ENCODE measurements at regions of chr15 and their contacts with region 1.

Region 1: DNA sequence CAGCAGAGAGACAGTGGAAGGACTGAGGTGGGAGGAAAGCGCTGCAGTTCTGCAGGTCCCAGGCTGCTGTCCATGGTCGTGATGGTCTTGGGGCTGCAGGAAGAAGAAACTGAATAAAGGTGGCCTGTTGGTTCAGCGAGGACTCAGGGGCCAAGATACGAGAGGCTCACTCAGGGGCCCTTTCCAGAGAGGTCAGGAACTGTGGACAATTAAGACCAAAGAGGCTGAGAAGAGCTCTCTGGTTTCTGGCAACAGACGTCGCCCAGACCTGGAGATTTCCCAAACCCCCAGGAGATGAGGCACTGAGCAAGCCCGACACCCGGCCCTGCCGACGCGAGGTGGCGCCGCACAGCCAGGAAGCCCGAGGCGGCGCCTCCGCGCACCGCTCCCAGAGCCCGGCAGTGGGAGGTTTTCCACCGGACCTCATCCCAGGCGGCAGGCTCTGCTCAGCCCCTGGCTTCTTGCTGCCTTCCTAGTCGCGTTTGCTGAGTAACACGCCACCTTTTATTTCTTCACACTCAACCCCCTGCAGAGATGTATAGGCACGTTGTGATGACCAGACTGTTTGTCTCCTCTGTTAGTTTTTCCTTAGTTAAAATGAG is 56.4 kb upstream of the ARRDC4 start:
- DNase-seq: peak; percentile 60 to 81 (median 75)
- ATAC-seq: peak; percentile 81 to 99 (median 92)
- H3K4me3 ChIP-seq: peak overlapping the region in 1 of 12 donors; percentile 6
- H3K27ac ChIP-seq: no peak overlapping the region
- H3K4me1 ChIP-seq: peaks cover 0 to 8% (median 0%) of the 10 kb centered on the region in 12 donors
- H3K27me3 ChIP-seq: peaks cover 0 to 40% (median 18%) of the 10 kb centered on the region in 9 donors
- CTCF ChIP-seq: peak; percentile 44 to 76 (median 66)
- POLR2A ChIP-seq: no peak

Region 2: GRCh38 chr15:98085003-98085639 is 181.0 kb after region 1 on chr15:
- intact Hi-C with region 1: loop called (anchors 1 to 2 kb)
- DNase-seq: peak in 1 of 5 donors; percentile 35
- ATAC-seq: no peak
- H3K4me3 ChIP-seq: no peak overlapping the region
- H3K27ac ChIP-seq: no peak overlapping the region
- H3K4me1 ChIP-seq: no peaks in the 10 kb centered on the region
- H3K27me3 ChIP-seq: no peaks in the 10 kb centered on the region
- CTCF ChIP-seq: peak; percentile 48 to 77 (median 68)
- POLR2A ChIP-seq: no peak

Region 3: DNA sequence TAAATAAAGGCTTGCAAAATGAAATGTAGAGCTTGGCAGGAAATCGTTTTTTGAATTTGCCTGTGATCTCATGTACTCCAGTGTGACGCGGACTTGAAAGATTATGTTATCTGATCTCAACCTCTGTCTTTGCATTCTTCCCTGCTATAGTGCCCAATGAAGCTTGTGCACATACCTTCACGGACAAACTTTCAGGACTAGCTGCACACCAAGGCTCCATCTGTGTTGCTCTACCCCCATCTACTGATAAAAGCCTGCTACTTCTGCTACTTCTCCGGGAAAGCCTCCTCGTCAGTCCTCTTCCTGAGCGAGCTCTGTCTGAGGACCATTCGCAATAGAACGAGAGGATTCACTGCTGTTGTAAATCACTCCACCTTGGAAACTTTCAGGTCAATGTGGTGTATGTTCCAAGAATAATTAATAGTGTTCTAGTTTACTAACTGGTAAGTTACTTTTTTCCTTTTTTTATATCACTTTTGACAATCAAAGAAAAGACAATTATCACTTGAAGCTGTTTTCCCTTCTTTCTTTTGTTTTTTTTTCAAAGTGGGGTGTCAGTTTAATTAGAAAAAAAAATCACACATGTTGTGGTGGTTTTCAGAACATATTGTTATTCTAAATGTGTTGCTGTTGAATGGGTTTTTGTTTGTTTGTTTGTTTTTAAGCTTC is 274.0 kb after region 1 on chr15:
- intact Hi-C with region 1: loop called in 9 of 10 experiments (anchors 2 to 5 kb)
- DNase-seq: peak in 3 of 5 donors; percentile 13 to 23 (median 22)
- ATAC-seq: peak in 3 of 4 donors; percentile 70 to 87 (median 72)
- H3K4me3 ChIP-seq: no peak overlapping the region
- H3K27ac ChIP-seq: no peak overlapping the region
- H3K4me1 ChIP-seq: no peaks in the 10 kb centered on the region
- H3K27me3 ChIP-seq: peaks cover 0 to 82% (median 19%) of the 10 kb centered on the region in 9 donors
- CTCF ChIP-seq: peak; percentile 31 to 74 (median 56)
- POLR2A ChIP-seq: no peak

Region 4: DNA sequence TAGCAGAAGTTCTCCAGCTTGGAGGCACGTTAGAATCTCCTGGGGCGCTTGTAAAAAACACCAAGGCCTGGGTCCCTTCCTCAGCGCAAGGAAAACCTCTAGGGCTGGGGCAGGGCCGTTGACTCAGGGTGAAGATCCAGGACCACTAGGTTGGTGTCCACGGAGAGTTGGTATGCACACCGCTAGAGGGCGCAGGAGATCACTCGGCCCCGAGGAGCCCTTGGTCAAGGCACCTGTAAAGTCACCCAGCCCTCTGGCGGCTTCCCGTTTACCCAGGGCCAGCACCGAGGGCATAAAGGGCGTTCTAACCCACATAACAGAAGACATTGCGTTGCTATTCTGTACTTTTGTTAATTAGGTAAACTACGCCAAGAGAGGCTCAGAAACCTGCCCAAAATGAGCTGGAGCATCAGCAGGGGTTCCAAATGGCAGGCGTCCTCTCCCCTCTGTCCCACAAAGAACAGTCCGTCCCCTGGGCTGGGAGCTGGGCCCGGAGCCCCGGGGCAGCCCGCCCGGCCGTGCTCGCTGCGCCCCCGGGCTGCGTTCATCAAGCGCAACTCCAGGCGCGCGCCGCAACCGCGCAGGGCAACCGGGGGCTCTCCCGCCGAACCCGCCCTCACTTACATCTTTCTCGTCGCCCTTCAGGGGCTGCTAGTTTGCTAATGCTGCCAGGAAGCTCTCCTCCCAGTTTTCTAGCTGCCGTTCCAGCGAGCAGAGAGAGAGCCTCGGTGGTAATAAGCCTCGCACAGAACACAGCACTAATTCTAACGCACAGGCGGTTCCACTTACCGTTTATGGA is 388.6 kb after region 1 on chr15:
- intact Hi-C with region 1: loop called (anchors 2 to 10 kb)
- DNase-seq: peak in 3 of 5 donors; percentile 16 to 37 (median 31)
- ATAC-seq: peak in 2 of 4 donors; percentile 40 to 69
- H3K4me3 ChIP-seq: peak overlapping the region in 6 of 12 donors; percentile 3 to 28 (median 12)
- H3K27ac ChIP-seq: no peak overlapping the region
- H3K4me1 ChIP-seq: peaks cover 0 to 9% (median 0%) of the 10 kb centered on the region in 12 donors
- H3K27me3 ChIP-seq: peaks cover 0 to 64% (median 7%) of the 10 kb centered on the region in 9 donors
- CTCF ChIP-seq: peak; percentile 25 to 62 (median 48)
- POLR2A ChIP-seq: no peak